ENCODE measurements at regions of chr2 and their contacts with region 1.

Region 1: GRCh38 chr2:60498816-60499429 is 54.5 kb downstream of the BCL11A start:
- DNase-seq: no peak
- ATAC-seq: no peak
- H3K4me3 ChIP-seq: no peak overlapping the region
- H3K27ac ChIP-seq: no peak overlapping the region
- H3K4me1 ChIP-seq: peaks cover 0 to 8% (median 5%) of the 10 kb centered on the region in 3 donors
- H3K27me3 ChIP-seq: no peaks in the 10 kb centered on the region
- CTCF ChIP-seq: no peak

Region 2: GRCh38 chr2:60033325-60033724 is 465.6 kb before region 1 on chr2:
- intact Hi-C with region 1: no loop called
- DNase-seq: no peak
- ATAC-seq: no peak
- H3K4me3 ChIP-seq: no peak overlapping the region
- H3K27ac ChIP-seq: no peak overlapping the region
- H3K4me1 ChIP-seq: peaks cover 0 to 8% (median 0%) of the 10 kb centered on the region in 3 donors
- H3K27me3 ChIP-seq: no peaks in the 10 kb centered on the region
- CTCF ChIP-seq: no peak

Region 3: GRCh38 chr2:60549238-60549927 is 50.5 kb after region 1 on chr2:
- intact Hi-C with region 1: loop called in 1 of 3 experiments (anchors 10 kb)
- DNase-seq: peak in 5 of 6 donors; percentile 43 to 83 (median 49)
- ATAC-seq: peak; percentile 11 to 17 (median 14)
- H3K4me3 ChIP-seq: peak overlapping the region; percentile 62 to 76 (median 68)
- H3K27ac ChIP-seq: peak overlapping the region; percentile 62 to 91 (median 79)
- H3K4me1 ChIP-seq: peaks cover 6 to 15% (median 11%) of the 10 kb centered on the region in 3 donors
- H3K27me3 ChIP-seq: no peaks in the 10 kb centered on the region
- CTCF ChIP-seq: no peak